Naive thymus-derived CD8-positive, alpha-beta T cell (primary cell): ENCODE measurements at regions of chr19 and their contacts with region 1.

Region 1: GRCh38 chr19:51441410-51442390 is 16.6 kb downstream of the SIGLEC8 start:
- DNase-seq: peak; percentile 48 to 94 (median 80)
- ATAC-seq: peak; percentile 88 to 92
- H3K4me3 Mint-ChIP-seq: peak overlapping the region; percentile 77 to 92 (median 88)
- H3K27ac Mint-ChIP-seq: peak overlapping the region; percentile 84 to 98 (median 93)
- H3K4me1 Mint-ChIP-seq: peaks cover 18 to 51% (median 38%) of the 10 kb centered on the region in 4 donors
- H3K27me3 Mint-ChIP-seq: peaks cover 0 to 3% (median under 1%) of the 10 kb centered on the region in 5 donors

Region 2: GRCh38 chr19:51393959-51394836 is 47.5 kb before region 1 on chr19:
- POLR2A ChIA-PET with region 1: interaction called, 13 read pairs
- DNase-seq: peak; percentile 63 to 92 (median 84)
- ATAC-seq: peak; percentile 97 to 98
- H3K4me3 Mint-ChIP-seq: peak overlapping the region; percentile 81 to 93 (median 88)
- H3K27ac Mint-ChIP-seq: peak overlapping the region; percentile 70 to 93 (median 88)
- H3K4me1 Mint-ChIP-seq: peaks cover 9 to 55% (median 27%) of the 10 kb centered on the region in 4 donors
- H3K27me3 Mint-ChIP-seq: peaks cover 0 to 6% (median 0%) of the 10 kb centered on the region in 5 donors

Region 3: GRCh38 chr19:51422053-51422448 is 19.6 kb before region 1 on chr19:
- POLR2A ChIA-PET with region 1: interaction called, 20 read pairs
- DNase-seq: peak; percentile 60 to 89 (median 80)
- ATAC-seq: peak; percentile 73 to 89
- H3K4me3 Mint-ChIP-seq: peak overlapping the region in 3 of 10 donors; percentile 4 to 57 (median 6)
- H3K27ac Mint-ChIP-seq: peak overlapping the region in 3 of 10 donors; percentile 31 to 86 (median 57)
- H3K4me1 Mint-ChIP-seq: peaks cover 4 to 24% (median 6%) of the 10 kb centered on the region in 4 donors
- H3K27me3 Mint-ChIP-seq: peaks cover 9 to 32% (median 10%) of the 10 kb centered on the region in 5 donors

Region 4: GRCh38 chr19:51460164-51460992 is 18.7 kb after region 1 on chr19:
- POLR2A ChIA-PET with region 1: no interaction called
- DNase-seq: no peak
- ATAC-seq: no peak
- H3K4me3 Mint-ChIP-seq: no peak overlapping the region
- H3K27ac Mint-ChIP-seq: peak overlapping the region in 1 of 10 donors; percentile 56
- H3K4me1 Mint-ChIP-seq: peaks cover 0 to 17% (median 8%) of the 10 kb centered on the region in 4 donors
- H3K27me3 Mint-ChIP-seq: peaks cover 16 to 53% (median 33%) of the 10 kb centered on the region in 5 donors